K562 (cell line): ENCODE measurements at regions of chr5 and their contacts with region 1.

Region 1: GRCh38 chr5:16552666-16553343 is 64.0 kb downstream of the RETREG1 start:
- DNase-seq: peak; percentile 49 to 68 (median 62)
- ATAC-seq: peak; percentile 94
- H3K4me3 ChIP-seq: no peak overlapping the region
- H3K27ac ChIP-seq: no peak overlapping the region
- H3K4me1 ChIP-seq: no peaks in the 10 kb centered on the region
- H3K27me3 ChIP-seq: no peaks in the 10 kb centered on the region
- CTCF ChIP-seq: peak; percentile 67 to 77 (median 75)
- EP300 ChIP-seq: no peak
- POLR2A ChIP-seq: no peak
- RAD21 ChIP-seq: peak; percentile 58 to 69

Region 2: GRCh38 chr5:16160706-16161105 is 392.1 kb before region 1 on chr5:
- CTCF ChIA-PET with region 1: no interaction called
- POLR2A ChIA-PET with region 1: no interaction called
- in situ Hi-C with region 1: no loop called
- intact Hi-C with region 1: loop called (anchors 2 kb)
- DNase-seq: peak; percentile 55 to 72 (median 60)
- ATAC-seq: peak; percentile 97
- H3K4me3 ChIP-seq: no peak overlapping the region
- H3K27ac ChIP-seq: no peak overlapping the region
- H3K4me1 ChIP-seq: no peaks in the 10 kb centered on the region
- H3K27me3 ChIP-seq: no peaks in the 10 kb centered on the region
- CTCF ChIP-seq: peak; percentile 62 to 72 (median 64)
- EP300 ChIP-seq: no peak
- POLR2A ChIP-seq: no peak
- RAD21 ChIP-seq: peak; percentile 45 to 80

Region 3: GRCh38 chr5:16345454-16345853 is 207.4 kb before region 1 on chr5:
- CTCF ChIA-PET with region 1: interaction called, 6 read pairs
- POLR2A ChIA-PET with region 1: no interaction called
- in situ Hi-C with region 1: no loop called
- intact Hi-C with region 1: loop called (anchors 1 kb)
- DNase-seq: peak in 3 of 4 experiments; percentile 18 to 57 (median 45)
- ATAC-seq: peak; percentile 87
- H3K4me3 ChIP-seq: no peak overlapping the region
- H3K27ac ChIP-seq: no peak overlapping the region
- H3K4me1 ChIP-seq: no peaks in the 10 kb centered on the region
- H3K27me3 ChIP-seq: no peaks in the 10 kb centered on the region
- CTCF ChIP-seq: peak; percentile 68 to 77 (median 72)
- EP300 ChIP-seq: no peak
- POLR2A ChIP-seq: no peak
- RAD21 ChIP-seq: peak; percentile 69 to 87

Region 4: DNA sequence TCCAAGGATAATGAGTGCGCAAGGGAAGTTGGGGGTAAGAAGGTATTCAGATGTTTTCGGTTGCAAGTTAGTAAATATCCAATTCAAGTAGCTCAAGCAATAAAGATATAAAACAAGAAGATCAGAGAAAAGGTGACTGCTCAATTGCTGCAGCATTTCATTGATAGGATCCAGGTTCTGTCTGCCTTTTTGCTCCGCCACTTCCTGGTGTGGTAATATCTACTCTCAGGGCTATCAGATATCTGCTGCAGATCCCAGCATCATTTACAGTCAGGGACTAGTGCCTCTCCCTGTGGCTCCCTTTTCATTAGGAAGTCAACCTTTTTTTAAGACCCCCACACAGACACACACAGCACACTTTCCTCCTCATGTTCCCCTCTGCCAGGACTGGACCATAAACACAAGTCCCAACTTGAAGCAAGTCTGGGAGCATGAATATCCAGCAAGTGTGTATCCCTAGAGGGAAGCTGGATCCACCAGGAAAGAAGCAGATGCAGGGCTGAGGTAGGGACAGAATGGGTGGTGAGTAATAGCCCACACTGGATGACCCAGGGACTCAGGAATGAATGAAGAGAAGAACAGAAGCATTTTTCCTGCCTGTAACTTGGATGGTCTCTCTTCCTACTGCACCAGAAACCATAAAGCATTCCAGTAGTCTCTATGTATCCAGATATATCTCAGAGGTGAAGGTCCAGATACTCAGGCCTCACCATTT is 140.9 kb before region 1 on chr5:
- CTCF ChIA-PET with region 1: no interaction called
- POLR2A ChIA-PET with region 1: no interaction called
- in situ Hi-C with region 1: no loop called
- intact Hi-C with region 1: no loop called
- DNase-seq: no peak
- ATAC-seq: no peak
- H3K4me3 ChIP-seq: no peak overlapping the region
- H3K27ac ChIP-seq: no peak overlapping the region
- H3K4me1 ChIP-seq: no peaks in the 10 kb centered on the region
- H3K27me3 ChIP-seq: peaks cover 3 to 8% of the 10 kb centered on the region in 2 experiments; a peak in 1 of 5 replicates
- CTCF ChIP-seq: no peak
- EP300 ChIP-seq: no peak
- POLR2A ChIP-seq: no peak
- RAD21 ChIP-seq: no peak

Region 5: DNA sequence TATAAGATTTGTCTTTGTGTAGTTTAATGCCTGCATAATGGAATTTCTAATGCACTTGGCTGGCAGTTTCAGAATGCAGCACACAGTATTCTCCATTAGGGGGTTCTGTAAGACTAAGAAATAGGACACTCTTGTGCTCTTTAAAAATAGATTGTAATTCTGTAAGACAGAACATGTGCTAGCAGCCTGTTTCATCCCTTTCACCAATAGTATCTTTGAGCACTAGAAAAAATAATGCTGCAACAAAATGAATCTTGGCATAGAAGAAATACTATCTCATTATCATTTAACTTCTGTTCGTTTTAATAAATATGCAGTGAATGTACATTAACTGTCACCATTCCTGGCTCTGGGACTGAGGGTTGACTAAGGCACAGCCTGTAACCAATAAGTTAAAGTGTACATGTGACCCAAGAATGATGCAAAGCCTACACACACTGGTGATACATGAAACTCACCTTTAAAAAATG is 63.4 kb before region 1 on chr5:
- CTCF ChIA-PET with region 1: interaction called, 22 read pairs
- POLR2A ChIA-PET with region 1: no interaction called
- in situ Hi-C with region 1: no loop called
- intact Hi-C with region 1: loop called (anchors 1 kb)
- DNase-seq: peak in 2 of 4 experiments; percentile 28 to 42
- ATAC-seq: peak; percentile 92
- H3K4me3 ChIP-seq: no peak overlapping the region
- H3K27ac ChIP-seq: no peak overlapping the region
- H3K4me1 ChIP-seq: no peaks in the 10 kb centered on the region
- H3K27me3 ChIP-seq: peaks cover 10 to 18% of the 10 kb centered on the region in 2 experiments; a peak in 4 of 5 replicates
- CTCF ChIP-seq: peak; percentile 48 to 73 (median 49); a peak in 4 of 6 replicates
- EP300 ChIP-seq: no peak
- POLR2A ChIP-seq: no peak
- RAD21 ChIP-seq: peak; percentile 93 to 95